ENCODE measurements at regions of chr11 and their contacts with region 1.

Region 1: DNA sequence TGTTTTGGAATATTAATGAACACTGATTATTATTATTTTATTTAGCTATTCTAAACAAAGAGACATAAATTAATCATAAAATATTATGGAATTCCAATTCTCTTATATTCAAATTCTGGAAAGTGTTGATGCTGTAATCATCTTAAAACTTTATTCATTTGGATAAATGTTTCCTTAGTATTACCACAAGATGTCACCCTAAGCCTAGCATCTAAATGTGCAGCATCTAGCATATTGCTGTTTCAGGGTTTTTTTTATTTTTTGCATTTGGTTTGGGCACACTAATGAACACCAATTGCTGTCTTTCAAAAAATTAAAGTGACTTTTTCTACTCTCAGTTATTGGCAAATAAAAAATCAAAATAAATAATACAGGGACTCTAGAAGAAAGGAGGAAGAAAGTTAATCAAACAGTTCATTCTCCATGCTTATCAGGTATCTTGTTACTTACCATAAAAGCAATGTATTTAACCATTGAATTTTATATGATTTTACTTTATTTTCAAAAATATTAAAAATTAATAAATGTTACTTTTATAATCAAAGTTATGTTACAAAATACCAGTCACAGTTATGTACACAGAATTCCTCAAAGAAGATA is 31.8 kb downstream of the DLG2 start:
- DNase-seq: peak; percentile 8
- H3K4me3 ChIP-seq: no peak overlapping the region
- H3K27ac ChIP-seq: no peak overlapping the region
- H3K4me1 ChIP-seq: no peaks in the 10 kb centered on the region
- H3K27me3 ChIP-seq: no peaks in the 10 kb centered on the region
- CTCF ChIP-seq: peak; percentile 34 to 59

Region 2: GRCh38 chr11:84558085-84558905 is 1037.1 kb before region 1 on chr11:
- CTCF ChIA-PET with region 1: no interaction called
- dilution Hi-C with region 1: no loop called
- in situ Hi-C with region 1: loop called (anchors 25 kb)
- intact Hi-C with region 1: no loop called
- DNase-seq: peak; percentile 27
- H3K4me3 ChIP-seq: no peak overlapping the region
- H3K27ac ChIP-seq: no peak overlapping the region
- H3K4me1 ChIP-seq: no peaks in the 10 kb centered on the region
- H3K27me3 ChIP-seq: no peaks in the 10 kb centered on the region
- CTCF ChIP-seq: peak; percentile 80 to 93

Region 3: GRCh38 chr11:84800755-84801346 is 794.5 kb before region 1 on chr11:
- CTCF ChIA-PET with region 1: no interaction called
- dilution Hi-C with region 1: no loop called
- in situ Hi-C with region 1: loop called in 1 of 2 experiments (anchors 25 kb)
- intact Hi-C with region 1: loop called (anchors 2 kb)
- DNase-seq: peak; percentile 8
- H3K4me3 ChIP-seq: no peak overlapping the region
- H3K27ac ChIP-seq: no peak overlapping the region
- H3K4me1 ChIP-seq: no peaks in the 10 kb centered on the region
- H3K27me3 ChIP-seq: peaks cover 2% of the 10 kb centered on the region
- CTCF ChIP-seq: peak; percentile 21 to 55

Region 4: DNA sequence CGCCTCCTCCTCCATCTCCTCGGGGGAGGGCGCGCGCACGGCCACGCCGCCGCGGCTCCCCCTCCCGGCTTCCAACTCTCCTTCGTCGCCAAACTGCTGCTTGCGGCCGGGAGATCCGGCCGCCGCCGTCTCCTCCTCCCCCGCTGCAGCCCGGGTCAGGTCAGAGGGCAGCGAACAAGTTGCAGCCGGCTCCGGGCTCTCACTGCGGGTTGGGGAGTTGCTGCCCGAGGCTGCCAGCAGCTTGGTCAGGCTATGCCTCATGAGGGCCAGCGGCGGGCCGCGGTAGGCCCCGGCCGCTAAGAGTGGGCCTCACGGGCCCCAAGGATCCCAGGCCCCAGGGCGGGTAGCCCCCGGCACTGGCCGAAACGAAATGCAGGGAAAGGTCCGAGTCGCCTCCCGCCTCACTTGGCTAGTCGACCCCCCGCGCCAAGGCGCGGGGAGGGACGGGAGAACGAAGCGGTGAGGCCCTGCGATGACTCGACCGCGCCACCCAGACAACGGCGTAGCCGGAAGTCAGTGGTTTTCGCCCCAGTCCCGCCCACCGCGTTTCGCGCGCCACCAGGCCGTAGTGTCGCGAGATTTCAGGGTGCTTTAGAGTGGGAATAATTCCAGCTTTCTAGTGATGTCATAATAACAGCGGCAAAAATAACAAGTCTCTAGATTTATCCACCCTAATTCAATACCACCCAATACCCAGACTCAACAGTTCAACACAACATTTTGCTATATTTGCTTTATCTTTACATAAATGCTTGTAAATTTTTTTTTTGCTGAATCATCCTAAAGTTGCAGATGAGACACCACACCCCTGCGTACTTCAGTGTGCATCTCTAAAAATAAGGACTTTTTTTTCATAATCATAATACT is 69.5 kb after region 1 on chr11 and contains the start of gene CREBZF:
- CTCF ChIA-PET with region 1: no interaction called
- dilution Hi-C with region 1: no loop called
- in situ Hi-C with region 1: no loop called
- intact Hi-C with region 1: loop called (anchors 2 kb)
- DNase-seq: peak; percentile 93
- H3K4me3 ChIP-seq: peak within 1 kb of the TSS; percentile 69 to 89 (median 88)
- H3K27ac ChIP-seq: peak within 1 kb of the TSS; percentile 93
- H3K4me1 ChIP-seq: peaks cover 2% of the 10 kb centered on the region
- H3K27me3 ChIP-seq: no peaks in the 10 kb centered on the region
- CTCF ChIP-seq: no peak
- total RNA-seq, gene CREBZF: 26.1 to 30.2 TPM

Region 5: DNA sequence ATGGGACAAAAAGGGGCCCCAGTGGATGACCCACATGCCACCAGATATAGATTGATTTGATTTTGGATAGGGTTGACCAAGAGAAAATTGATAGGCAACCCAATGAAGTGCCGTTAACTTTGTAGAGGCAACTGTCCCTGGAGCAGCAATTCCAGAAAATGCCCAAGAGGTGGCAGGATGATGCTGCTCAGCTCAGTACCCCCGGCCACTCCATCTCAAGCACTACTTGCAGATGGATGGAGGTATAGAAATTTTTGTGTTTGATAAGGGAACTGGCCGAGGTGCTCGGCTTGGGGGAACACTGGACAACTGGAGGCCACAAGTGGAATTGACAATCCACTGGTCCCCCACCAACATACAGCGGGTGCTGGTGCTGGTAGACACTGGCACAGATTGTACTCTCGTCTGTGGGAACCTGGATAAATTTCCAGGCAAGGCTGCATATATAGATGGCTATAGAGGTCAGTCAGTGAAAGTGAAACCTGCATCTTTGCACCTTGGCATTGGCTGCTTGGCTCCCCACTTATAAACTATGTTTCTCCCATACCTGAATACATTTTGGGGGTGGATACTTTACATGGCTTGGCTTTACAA is 346.1 kb after region 1 on chr11:
- CTCF ChIA-PET with region 1: no interaction called
- dilution Hi-C with region 1: no loop called
- in situ Hi-C with region 1: no loop called
- intact Hi-C with region 1: loop called (anchors 5 kb)
- DNase-seq: peak; percentile 46
- H3K4me3 ChIP-seq: no peak overlapping the region
- H3K27ac ChIP-seq: no peak overlapping the region
- H3K4me1 ChIP-seq: peaks cover 4% of the 10 kb centered on the region
- H3K27me3 ChIP-seq: no peaks in the 10 kb centered on the region
- CTCF ChIP-seq: peak; percentile 57 to 78

Region 6: DNA sequence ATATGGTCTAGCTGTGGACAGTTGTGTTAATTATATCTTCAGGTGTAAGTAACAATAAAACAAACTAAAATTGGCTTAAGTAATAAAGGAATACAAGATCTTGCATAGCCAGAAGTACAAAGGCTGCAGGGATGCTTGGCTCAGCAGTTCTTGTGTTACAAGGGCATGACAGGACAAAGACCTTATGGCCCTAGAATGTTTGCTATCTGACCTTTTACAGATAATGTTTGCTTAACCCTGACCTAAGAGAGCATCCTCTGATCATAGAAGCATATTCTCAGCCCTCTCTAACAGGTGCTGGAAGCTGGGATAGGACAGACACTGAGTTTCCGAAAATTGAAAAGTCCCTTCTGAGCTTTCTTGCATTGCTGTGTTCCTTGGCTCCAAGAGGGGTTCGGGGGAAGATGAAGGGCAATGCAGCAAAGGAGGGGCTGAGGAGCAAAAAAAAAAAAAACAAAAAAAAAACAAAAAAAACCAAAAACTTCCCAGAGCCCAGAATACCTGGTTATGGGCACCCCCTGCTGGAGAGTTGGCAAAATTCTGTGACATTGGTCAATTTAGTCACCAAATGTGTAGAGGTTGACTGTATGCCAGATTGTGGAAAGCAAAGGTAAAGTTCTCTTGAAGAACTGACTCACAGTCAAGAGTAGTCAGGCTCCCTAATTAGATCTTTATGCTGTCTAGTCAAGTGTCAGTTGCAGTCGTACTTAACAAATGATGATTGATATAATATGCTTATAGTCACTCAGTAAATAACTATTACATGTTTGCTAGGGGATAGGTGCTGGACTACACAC is 696.3 kb after region 1 on chr11:
- CTCF ChIA-PET with region 1: no interaction called
- dilution Hi-C with region 1: no loop called
- in situ Hi-C with region 1: no loop called
- intact Hi-C with region 1: loop called (anchors 5 kb)
- DNase-seq: peak; percentile 70
- H3K4me3 ChIP-seq: no peak overlapping the region
- H3K27ac ChIP-seq: no peak overlapping the region
- H3K4me1 ChIP-seq: no peaks in the 10 kb centered on the region
- H3K27me3 ChIP-seq: no peaks in the 10 kb centered on the region
- CTCF ChIP-seq: peak; percentile 71 to 79